G401 (cell line): ENCODE measurements at regions of chr2 and their contacts with region 1.

Region 1: GRCh38 chr2:105362862-105363591 is 25.7 kb downstream of the C2orf49 start:
- DNase-seq: no peak

Region 2: DNA sequence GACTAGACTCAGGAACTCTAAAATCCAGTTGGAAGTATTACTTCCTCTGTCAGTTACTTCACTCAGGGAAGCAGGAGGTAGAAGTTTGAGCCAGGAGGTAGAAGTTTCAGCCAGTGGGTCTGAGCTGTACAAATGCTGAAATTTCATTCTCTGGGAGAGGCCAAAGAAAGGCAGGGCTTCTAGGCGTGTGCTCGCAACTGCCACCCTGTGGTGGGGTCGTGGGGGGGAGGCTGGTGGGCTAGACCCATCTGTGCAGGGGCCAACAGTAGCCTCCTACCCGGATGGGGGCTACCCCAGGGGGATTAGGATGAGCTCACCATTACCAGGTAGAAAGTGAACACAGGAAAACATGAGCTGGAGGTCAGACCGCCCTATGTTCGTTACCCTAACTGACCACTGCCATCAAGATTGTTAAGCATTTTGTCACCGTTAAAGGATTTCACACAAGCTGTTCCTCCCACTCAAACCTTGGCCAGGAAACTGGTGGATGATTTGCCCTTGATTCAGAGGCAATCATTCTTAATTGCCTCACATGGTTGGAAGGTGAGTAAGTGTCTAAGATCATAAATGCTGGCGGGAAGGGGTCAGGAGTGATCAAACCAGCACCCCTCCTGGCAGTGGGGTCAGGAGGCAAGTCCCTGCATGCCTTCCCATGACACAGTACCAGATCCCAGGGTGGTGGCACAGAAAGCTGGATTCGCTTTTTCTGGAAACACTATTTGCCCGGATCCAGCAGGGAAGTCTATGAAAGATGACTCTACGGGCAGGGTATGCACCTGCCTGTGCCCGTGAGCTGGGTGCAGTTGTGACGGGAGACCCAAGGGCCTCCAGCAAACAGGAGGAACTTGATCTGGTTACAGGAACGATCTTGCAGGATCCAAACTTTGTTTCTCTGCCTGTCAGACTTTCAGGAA is 41.0 kb after region 1 on chr2:
- in situ Hi-C with region 1: loop called (anchors 5 kb)
- DNase-seq: peak; percentile 41

Region 3: GRCh38 chr2:105449076-105449475 is 86.0 kb after region 1 on chr2:
- in situ Hi-C with region 1: no loop called
- DNase-seq: no peak